Calu3 (cell line): ENCODE measurements at regions of chr16 and their contacts with region 1.

Region 1: DNA sequence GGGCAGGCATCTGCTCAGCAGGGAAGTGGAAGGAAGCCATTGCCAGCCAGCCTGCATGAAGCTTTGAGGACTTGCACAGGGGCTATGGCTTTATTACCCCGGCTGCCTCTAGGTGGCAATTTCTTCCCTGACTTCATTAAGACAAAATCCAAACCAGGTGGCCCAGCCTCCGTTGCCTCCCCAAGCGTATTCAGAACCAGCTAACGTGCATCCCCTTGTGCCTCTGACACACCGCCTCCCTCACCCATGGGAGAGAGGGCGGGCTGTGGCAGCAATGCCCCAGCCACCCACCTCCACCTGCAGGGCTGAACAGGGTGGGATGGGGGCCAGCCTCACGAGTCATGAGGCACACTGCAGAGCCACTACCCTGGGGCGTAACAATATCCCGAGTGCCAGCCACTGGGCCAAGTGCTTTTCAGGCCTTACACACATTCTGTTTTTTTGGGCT is 6.8 kb downstream of the KIFC3 start:
- DNase-seq: peak; percentile 76
- H3K4me3 Mint-ChIP-seq: no peak overlapping the region
- H3K27ac Mint-ChIP-seq: no peak overlapping the region
- H3K4me1 Mint-ChIP-seq: peaks cover 37% of the 10 kb centered on the region
- H3K27me3 Mint-ChIP-seq: no peaks in the 10 kb centered on the region
- CTCF ChIP-seq: peak; percentile 72

Region 2: DNA sequence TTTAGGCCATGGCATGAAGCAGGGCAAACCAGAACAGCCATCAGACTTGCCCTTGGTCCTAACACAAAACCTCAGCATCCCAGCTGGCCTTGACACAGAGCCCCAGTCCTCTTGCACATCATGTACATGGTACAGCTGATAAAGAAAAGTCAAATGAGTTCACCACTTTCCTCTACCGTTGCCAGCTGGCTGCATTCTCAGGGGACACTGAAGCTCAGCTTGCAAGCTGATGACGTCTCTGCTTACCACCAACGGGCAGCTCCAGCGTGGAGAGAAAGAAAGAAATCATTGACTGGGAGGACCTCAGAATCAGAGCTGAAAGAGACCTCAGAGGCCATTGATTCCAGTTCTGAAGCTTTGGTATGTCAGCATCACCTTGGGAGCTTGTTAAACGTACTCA is 1839.6 kb before region 1 on chr16:
- CTCF ChIA-PET with region 1: no interaction called
- intact Hi-C with region 1: no loop called
- DNase-seq: no peak
- H3K4me3 Mint-ChIP-seq: no peak overlapping the region
- H3K27ac Mint-ChIP-seq: no peak overlapping the region
- H3K4me1 Mint-ChIP-seq: no peaks in the 10 kb centered on the region
- H3K27me3 Mint-ChIP-seq: peaks cover 20% of the 10 kb centered on the region
- CTCF ChIP-seq: no peak

Region 3: DNA sequence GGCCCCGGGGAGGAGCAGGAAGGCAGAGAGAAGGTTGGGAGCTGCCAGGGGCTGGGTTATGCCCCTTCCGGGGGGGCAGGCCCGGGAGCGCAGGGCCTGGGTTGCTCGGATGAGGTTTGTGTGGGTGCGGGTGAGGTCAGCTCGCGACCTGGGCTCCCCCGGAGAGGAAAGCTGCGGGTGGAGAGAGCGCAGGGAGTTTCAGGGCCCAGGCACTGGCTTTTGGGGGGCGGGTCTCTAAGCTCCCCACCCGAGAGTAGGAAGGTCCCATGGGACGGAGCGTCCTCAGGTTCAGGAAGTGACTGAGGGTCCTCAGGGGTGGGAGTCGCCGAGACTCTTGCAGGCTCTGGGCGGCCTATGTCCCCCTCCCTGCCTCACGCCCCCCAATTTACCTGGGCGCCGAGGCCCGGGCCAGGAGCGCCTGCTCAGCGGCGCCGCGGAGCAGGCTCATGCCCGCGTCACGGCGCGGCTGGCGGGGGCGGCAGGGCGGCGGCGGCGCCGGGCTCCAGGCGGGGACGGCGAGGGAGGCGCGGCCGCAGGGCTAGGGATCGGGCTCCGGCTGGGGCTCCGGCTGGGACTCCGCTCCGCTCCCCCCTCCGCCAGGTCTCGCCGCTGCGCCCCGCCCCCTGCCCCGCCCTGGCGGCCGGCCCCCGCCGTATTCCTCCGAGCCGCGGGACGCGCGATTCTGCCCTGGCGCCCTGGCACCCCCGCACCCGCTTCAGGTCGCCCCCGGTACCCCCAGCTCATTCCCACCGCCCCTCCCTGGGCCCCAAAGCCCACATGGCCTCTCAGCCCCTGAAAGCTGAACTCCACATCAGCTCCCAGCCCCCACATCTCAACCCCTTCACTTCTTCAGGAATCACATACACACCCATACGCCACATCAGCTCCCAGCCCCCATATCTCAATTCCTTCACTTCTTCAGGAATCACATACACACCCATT is 309.3 kb before region 1 on chr16 and contains the start of gene DOK4:
- CTCF ChIA-PET with region 1: no interaction called
- intact Hi-C with region 1: no loop called
- DNase-seq: peak; percentile 92
- H3K4me3 Mint-ChIP-seq: peak within 1 kb of the TSS; percentile 90
- H3K27ac Mint-ChIP-seq: peak within 1 kb of the TSS; percentile 33
- H3K4me1 Mint-ChIP-seq: peaks cover 12% of the 10 kb centered on the region
- H3K27me3 Mint-ChIP-seq: no peaks in the 10 kb centered on the region
- CTCF ChIP-seq: no peak
- total RNA-seq, gene DOK4: 23.0 and 34.7 TPM in 2 replicates

Region 4: DNA sequence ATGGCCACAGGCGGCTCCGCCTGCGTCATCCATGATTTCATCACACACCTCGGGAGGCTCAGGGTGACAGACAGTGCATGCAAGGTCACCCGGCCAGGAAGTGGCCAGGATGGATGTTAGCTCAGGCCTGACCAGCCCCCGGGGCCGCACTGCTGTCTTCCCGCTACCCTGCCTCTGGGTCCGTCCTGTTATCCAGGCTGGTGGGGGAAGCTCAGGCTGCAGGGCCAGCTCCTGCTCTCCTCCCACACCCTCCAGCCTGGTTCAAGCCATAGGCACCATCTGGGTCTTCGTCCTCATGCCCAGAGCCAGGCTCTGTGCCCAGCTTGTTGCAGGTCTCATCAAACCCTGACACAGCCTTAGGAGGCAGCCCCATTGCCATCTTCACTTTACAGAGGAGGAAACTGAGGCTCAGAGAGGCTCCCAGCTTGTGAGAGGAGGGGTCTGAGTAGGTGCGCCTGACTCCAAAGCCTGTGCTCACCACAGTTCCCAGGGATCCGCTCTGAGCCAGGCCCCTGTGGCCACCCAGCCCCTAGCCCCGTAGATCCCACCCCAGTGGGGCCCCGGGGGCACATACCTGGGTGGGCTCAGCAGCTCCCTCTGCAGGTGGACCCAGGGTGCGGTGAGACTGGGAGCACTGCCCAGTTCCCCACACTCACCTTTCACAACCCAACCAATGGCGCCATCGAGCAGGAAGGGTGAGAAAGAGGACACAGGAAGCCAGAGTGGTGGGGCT is 127.8 kb before region 1 on chr16:
- CTCF ChIA-PET with region 1: no interaction called
- intact Hi-C with region 1: no loop called
- DNase-seq: peak; percentile 34
- H3K4me3 Mint-ChIP-seq: no peak overlapping the region
- H3K27ac Mint-ChIP-seq: no peak overlapping the region
- H3K4me1 Mint-ChIP-seq: no peaks in the 10 kb centered on the region
- H3K27me3 Mint-ChIP-seq: peaks cover 42% of the 10 kb centered on the region
- CTCF ChIP-seq: peak; percentile 56

Region 5: GRCh38 chr16:57810197-57811031 is 15.0 kb after region 1 on chr16:
- CTCF ChIA-PET with region 1: interaction called, 12 read pairs
- intact Hi-C with region 1: no loop called
- DNase-seq: peak; percentile 94
- H3K4me3 Mint-ChIP-seq: peak overlapping the region; percentile 46
- H3K27ac Mint-ChIP-seq: peak overlapping the region; percentile 71
- H3K4me1 Mint-ChIP-seq: peaks cover 77% of the 10 kb centered on the region
- H3K27me3 Mint-ChIP-seq: no peaks in the 10 kb centered on the region
- CTCF ChIP-seq: no peak

Region 6: DNA sequence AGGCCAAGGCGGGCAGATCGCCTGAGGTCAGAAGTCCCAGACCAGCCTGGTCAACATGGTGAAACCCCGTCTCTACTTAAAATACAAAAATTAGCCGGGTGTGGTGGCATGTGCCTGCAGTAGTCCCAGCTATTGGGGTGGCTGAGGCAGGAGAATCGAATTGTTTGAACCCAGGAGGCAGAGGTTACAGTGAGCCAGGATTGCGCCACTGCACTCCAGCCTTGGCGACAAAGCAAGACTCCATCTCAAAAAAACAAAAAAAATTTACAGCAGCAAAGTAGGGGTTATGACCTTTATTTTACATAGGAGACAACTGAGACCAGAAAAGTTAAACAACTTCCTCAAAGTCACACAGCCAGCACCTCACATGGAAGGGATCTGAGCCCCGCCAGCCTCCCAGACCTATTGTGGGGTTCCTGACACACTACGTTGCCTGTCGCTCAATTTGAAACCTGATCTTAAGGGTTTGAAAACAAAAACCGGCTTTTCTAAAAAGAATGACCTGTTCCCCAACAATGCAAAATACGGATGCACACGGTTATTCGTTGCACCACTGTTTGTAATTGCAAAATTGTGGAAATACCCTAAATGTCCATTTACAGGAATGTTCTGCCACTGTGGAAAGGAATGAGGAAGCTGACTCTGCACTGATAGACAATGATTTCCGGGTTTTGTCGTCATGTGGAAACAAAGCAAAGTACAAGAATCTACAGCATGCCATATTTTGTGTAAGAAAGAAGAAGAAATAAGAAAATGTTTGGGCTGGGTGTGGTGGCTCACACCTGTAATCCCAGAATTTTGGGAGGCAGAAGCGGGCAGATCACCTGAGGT is 98.3 kb after region 1 on chr16:
- CTCF ChIA-PET with region 1: no interaction called
- intact Hi-C with region 1: loop called (anchors 1 kb)
- DNase-seq: peak; percentile 85
- H3K4me3 Mint-ChIP-seq: peak overlapping the region; percentile 50
- H3K27ac Mint-ChIP-seq: peak overlapping the region; percentile 98
- H3K4me1 Mint-ChIP-seq: peaks cover 50% of the 10 kb centered on the region
- H3K27me3 Mint-ChIP-seq: no peaks in the 10 kb centered on the region
- CTCF ChIP-seq: no peak

Region 7: DNA sequence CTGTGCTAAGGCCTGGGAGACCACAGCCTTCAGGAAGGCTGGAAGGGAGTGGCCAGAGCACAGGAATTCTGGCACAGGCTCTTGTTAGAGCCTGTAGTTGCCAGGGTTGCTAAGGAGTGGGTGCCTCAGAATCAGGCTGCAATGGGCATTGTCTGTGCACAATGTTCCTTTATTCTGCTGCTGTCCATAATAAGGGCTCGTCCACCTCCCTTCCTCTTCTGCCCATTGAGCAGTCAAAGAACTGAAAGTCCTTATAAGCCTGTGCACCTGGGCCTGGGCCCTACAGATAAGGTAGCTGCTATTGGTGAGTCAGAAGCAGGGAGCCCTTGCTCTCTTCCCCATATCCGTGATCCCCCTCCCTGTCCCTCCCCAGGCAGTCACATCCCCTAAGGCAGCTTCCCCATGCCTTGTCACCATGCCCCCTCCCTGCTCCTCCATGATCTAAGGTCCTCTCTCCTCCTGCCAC is 180.9 kb after region 1 on chr16:
- CTCF ChIA-PET with region 1: no interaction called
- intact Hi-C with region 1: no loop called
- DNase-seq: no peak
- H3K4me3 Mint-ChIP-seq: no peak overlapping the region
- H3K27ac Mint-ChIP-seq: no peak overlapping the region
- H3K4me1 Mint-ChIP-seq: no peaks in the 10 kb centered on the region
- H3K27me3 Mint-ChIP-seq: peaks cover 27% of the 10 kb centered on the region
- CTCF ChIP-seq: no peak